Mammary epithelial cell (primary cell): ENCODE measurements at regions of chr15 and their contacts with region 1.

Region 1: GRCh38 chr15:40357723-40358470 is at the start of gene DISP2:
- DNase-seq: peak; percentile 71
- H3K4me3 ChIP-seq: peak within 1 kb of the TSS; percentile 37 to 53 (median 52)
- H3K27ac ChIP-seq: no peak within 1 kb of the TSS
- H3K4me1 ChIP-seq: peaks cover 32% of the 10 kb centered on the region
- H3K27me3 ChIP-seq: no peaks in the 10 kb centered on the region
- CTCF ChIP-seq: no peak
- total RNA-seq, gene DISP2: under 0.01 to 1.6 TPM

Region 2: GRCh38 chr15:40289140-40289775 is 68.6 kb before region 1 on chr15:
- CTCF ChIA-PET with region 1: no interaction called
- dilution Hi-C with region 1: loop called (anchors 5 kb)
- in situ Hi-C with region 1: no loop called
- intact Hi-C with region 1: no loop called
- DNase-seq: peak; percentile 41
- H3K4me3 ChIP-seq: no peak overlapping the region
- H3K27ac ChIP-seq: no peak overlapping the region
- H3K4me1 ChIP-seq: peaks cover 5% of the 10 kb centered on the region
- H3K27me3 ChIP-seq: no peaks in the 10 kb centered on the region
- CTCF ChIP-seq: peak in 1 of 2 donors; percentile 29